CD8-positive, alpha-beta T cell (primary cell): ENCODE measurements at regions of chr19 and their contacts with region 1.

Region 1: DNA sequence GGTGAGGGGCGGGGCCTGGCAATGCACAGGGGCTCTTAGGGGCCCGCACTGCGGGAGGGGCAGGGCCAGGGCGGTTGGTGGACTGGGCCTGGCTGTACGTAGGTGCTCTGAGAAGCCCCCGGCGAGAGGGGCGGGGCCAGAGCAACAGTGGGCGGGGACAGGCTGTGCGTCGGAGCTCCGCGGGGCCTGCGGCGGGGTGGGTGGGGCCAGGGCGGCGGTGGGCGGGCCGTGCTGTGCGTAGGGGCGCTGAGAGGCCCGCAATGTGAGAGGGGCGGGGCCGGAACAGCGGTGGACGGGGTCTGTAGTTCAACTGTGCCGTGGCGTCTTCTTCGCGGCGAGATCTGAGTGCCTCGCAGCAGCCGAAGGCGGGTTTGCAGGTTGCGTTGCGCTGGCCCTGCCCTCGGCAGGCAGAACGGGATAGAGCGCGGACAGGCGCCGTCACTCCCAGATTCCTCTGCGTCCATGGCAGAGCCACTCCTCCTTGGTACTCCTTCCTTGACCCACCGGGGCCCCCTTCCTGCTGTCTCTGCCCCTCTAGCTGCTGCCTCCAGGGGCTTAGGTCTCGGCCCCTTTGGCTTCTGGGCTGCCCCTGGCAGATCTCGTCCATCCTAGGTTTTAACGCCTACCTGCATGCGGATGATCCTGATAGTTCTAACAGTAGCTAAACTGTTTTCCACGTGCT is 33.2 kb downstream of the CCNE1 start:
- DNase-seq: peak; percentile 92 to 99 (median 97)
- ATAC-seq: peak; percentile 79
- H3K4me3 ChIP-seq: peak overlapping the region; percentile 93 to 95
- H3K4me3 Mint-ChIP-seq: peak overlapping the region; percentile 96
- H3K27ac ChIP-seq: peak overlapping the region; percentile 74 to 80
- H3K27ac Mint-ChIP-seq: peak overlapping the region; percentile 97
- H3K4me1 ChIP-seq: peaks cover 12% of the 10 kb centered on the region
- H3K4me1 Mint-ChIP-seq: peaks cover 14% of the 10 kb centered on the region
- H3K27me3 ChIP-seq: peaks cover 0 to 7% of the 10 kb centered on the region in 2 experiments
- H3K27me3 Mint-ChIP-seq: no peaks in the 10 kb centered on the region
- CTCF ChIP-seq: no peak

Region 2: GRCh38 chr19:28883241-28883693 is 961.8 kb before region 1 on chr19:
- CTCF ChIA-PET with region 1: no interaction called
- POLR2A ChIA-PET with region 1: no interaction called
- intact Hi-C with region 1: no loop called
- DNase-seq: no peak
- ATAC-seq: no peak
- H3K4me3 ChIP-seq: no peak overlapping the region
- H3K4me3 Mint-ChIP-seq: no peak overlapping the region
- H3K27ac ChIP-seq: no peak overlapping the region
- H3K27ac Mint-ChIP-seq: no peak overlapping the region
- H3K4me1 ChIP-seq: no peaks in the 10 kb centered on the region
- H3K4me1 Mint-ChIP-seq: no peaks in the 10 kb centered on the region
- H3K27me3 ChIP-seq: peaks cover 0 to 1% of the 10 kb centered on the region in 2 experiments
- H3K27me3 Mint-ChIP-seq: peaks cover 3% of the 10 kb centered on the region
- CTCF ChIP-seq: no peak

Region 3: DNA sequence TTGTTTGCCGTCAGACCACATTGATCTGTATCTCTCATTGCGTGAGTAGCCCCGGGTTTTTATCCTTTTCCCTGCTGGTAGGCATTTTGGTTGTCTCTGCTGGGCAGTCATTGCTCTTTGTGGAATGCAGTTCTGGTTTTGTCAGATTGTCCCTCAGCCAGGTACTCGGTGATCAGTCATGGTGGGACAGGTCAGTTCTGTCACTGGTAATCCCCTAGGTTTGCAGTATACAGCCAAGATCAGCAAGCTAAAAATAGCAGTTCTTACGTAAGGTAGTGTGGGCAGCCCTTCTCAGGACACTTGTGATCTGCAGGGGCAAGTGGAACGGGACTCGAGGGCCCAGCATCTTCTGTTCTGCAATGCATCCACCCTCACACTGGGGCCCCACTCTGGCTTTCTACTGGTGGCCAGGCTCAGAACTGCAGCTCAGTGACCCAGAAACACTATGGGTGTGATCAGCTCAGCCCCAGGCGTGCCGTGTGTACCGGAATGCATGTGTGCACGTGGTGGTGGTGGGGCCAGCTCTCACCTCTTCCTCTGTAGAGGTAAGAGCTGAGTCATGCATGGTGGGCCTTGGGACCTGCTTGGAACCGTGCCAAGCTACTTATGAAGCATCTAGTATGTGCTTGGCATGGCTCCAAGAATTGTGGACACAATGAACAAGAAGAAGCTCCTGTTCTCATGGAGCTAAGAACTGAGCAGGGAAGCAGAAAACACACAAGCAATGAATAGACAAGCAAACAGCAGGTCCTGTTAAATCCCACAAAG is 173.5 kb before region 1 on chr19:
- CTCF ChIA-PET with region 1: no interaction called
- POLR2A ChIA-PET with region 1: interaction called, 3 read pairs
- intact Hi-C with region 1: loop called in 1 of 2 experiments (anchors 5 kb)
- DNase-seq: peak; percentile 73 to 96 (median 91)
- ATAC-seq: peak; percentile 62
- H3K4me3 ChIP-seq: peak overlapping the region; percentile 16 to 26
- H3K4me3 Mint-ChIP-seq: peak overlapping the region; percentile 49
- H3K27ac ChIP-seq: peak overlapping the region; percentile 80 to 84
- H3K27ac Mint-ChIP-seq: peak overlapping the region; percentile 94
- H3K4me1 ChIP-seq: peaks cover 97% of the 10 kb centered on the region
- H3K4me1 Mint-ChIP-seq: peaks cover 90% of the 10 kb centered on the region
- H3K27me3 ChIP-seq: no peaks in the 10 kb centered on the region
- H3K27me3 Mint-ChIP-seq: no peaks in the 10 kb centered on the region
- CTCF ChIP-seq: peak; percentile 62

Region 4: GRCh38 chr19:29811125-29812079 is 33.6 kb before region 1 on chr19 and contains the start of gene CCNE1:
- CTCF ChIA-PET with region 1: interaction called, 3 read pairs
- POLR2A ChIA-PET with region 1: interaction called, 7 read pairs
- intact Hi-C with region 1: loop called (anchors 1 kb)
- DNase-seq: peak; percentile 84 to 98 (median 94)
- ATAC-seq: peak; percentile 95
- H3K4me3 ChIP-seq: peak within 1 kb of the TSS; percentile 54 to 58
- H3K4me3 Mint-ChIP-seq: peak within 1 kb of the TSS; percentile 93
- H3K27ac ChIP-seq: peak within 1 kb of the TSS; percentile 58 to 59
- H3K27ac Mint-ChIP-seq: peak within 1 kb of the TSS; percentile 75
- H3K4me1 ChIP-seq: peaks cover 5% of the 10 kb centered on the region
- H3K4me1 Mint-ChIP-seq: peaks cover 13% of the 10 kb centered on the region
- H3K27me3 ChIP-seq: no peaks in the 10 kb centered on the region
- H3K27me3 Mint-ChIP-seq: no peaks in the 10 kb centered on the region
- CTCF ChIP-seq: no peak
- total RNA-seq, gene CCNE1: 4.9 to 6.6 TPM

Region 5: GRCh38 chr19:29858000-29858596 is 13.1 kb after region 1 on chr19:
- CTCF ChIA-PET with region 1: interaction called, 12 read pairs
- POLR2A ChIA-PET with region 1: interaction called, 6 read pairs
- intact Hi-C with region 1: no loop called
- DNase-seq: peak in 6 of 9 experiments; percentile 33 to 65 (median 50)
- ATAC-seq: peak; percentile 86
- H3K4me3 ChIP-seq: no peak overlapping the region
- H3K4me3 Mint-ChIP-seq: no peak overlapping the region
- H3K27ac ChIP-seq: no peak overlapping the region
- H3K27ac Mint-ChIP-seq: no peak overlapping the region
- H3K4me1 ChIP-seq: peaks cover 5% of the 10 kb centered on the region
- H3K4me1 Mint-ChIP-seq: peaks cover 2% of the 10 kb centered on the region
- H3K27me3 ChIP-seq: peaks cover 0 to 1% of the 10 kb centered on the region in 2 experiments
- H3K27me3 Mint-ChIP-seq: peaks cover 14% of the 10 kb centered on the region
- CTCF ChIP-seq: peak; percentile 67

Region 6: DNA sequence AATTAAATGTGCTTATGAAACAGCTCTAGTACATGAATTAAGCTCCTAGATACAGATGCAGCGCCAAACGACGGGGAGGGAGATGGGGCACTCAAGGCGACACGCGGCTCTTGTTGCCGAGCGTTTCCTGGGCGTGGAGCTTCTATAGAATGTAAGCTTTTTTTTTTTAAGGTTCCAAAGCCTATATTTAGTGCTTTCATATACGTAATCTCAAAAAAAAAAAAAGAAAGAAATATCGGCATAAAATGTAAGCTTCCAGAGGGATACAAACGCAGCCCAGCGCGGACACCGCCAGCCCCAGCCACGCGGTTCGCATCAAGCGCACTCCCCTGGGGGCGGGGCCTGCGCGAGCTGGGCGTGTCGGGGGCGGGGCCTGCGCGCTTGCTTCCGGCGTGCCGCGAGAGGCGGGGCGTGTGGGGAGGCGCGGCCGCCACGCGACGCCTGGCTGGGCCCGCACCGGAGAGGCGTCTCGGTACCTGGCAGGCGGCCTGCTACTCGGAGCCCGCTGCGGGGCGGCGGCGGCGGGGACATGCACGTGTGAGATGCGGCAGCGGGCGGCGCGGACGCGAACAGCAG is 96.9 kb after region 1 on chr19 and contains the start of gene URI1:
- CTCF ChIA-PET with region 1: no interaction called
- POLR2A ChIA-PET with region 1: interaction called, 5 read pairs
- intact Hi-C with region 1: loop called (anchors 1 kb)
- DNase-seq: peak; percentile 87 to 98 (median 92)
- ATAC-seq: peak; percentile 92
- H3K4me3 ChIP-seq: peak within 1 kb of the TSS; percentile 81 to 85
- H3K4me3 Mint-ChIP-seq: peak within 1 kb of the TSS; percentile 97
- H3K27ac ChIP-seq: peak within 1 kb of the TSS; percentile 59 to 64
- H3K27ac Mint-ChIP-seq: peak within 1 kb of the TSS; percentile 94
- H3K4me1 ChIP-seq: peaks cover 40% of the 10 kb centered on the region
- H3K4me1 Mint-ChIP-seq: peaks cover 47% of the 10 kb centered on the region
- H3K27me3 ChIP-seq: peaks cover 0 to 2% of the 10 kb centered on the region in 2 experiments
- H3K27me3 Mint-ChIP-seq: peaks cover 3% of the 10 kb centered on the region
- CTCF ChIP-seq: no peak
- total RNA-seq, gene URI1: 51.3 to 56.4 TPM

Region 7: DNA sequence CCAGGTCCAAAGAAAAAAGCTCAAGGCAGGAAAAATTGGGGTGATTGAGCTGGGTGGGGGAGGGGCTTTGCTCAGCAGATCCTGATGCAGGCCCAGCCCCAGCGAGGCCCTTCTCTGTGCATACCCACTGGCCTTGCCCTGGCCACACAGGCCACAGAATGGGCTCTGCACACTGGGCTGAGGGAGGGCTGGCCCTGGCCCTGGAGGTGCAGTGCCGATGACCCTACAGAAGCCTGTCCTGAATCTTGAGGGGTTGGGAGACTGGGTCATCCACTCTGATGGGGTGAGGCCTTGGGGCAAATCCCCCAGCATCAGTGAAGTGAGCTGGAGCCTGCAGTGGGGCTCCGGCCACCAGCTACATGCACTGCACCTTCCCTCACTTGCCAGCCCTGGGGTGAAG is 250.1 kb after region 1 on chr19:
- CTCF ChIA-PET with region 1: no interaction called
- POLR2A ChIA-PET with region 1: no interaction called
- intact Hi-C with region 1: no loop called
- DNase-seq: no peak
- ATAC-seq: no peak
- H3K4me3 ChIP-seq: no peak overlapping the region
- H3K4me3 Mint-ChIP-seq: no peak overlapping the region
- H3K27ac ChIP-seq: no peak overlapping the region
- H3K27ac Mint-ChIP-seq: no peak overlapping the region
- H3K4me1 ChIP-seq: no peaks in the 10 kb centered on the region
- H3K4me1 Mint-ChIP-seq: no peaks in the 10 kb centered on the region
- H3K27me3 ChIP-seq: no peaks in the 10 kb centered on the region
- H3K27me3 Mint-ChIP-seq: no peaks in the 10 kb centered on the region
- CTCF ChIP-seq: no peak